Activated T-helper 2 cell treated with anti-CD3 and anti-CD28 coated beads, Interferon-gamma antibody, Interleukin-2, Interleukin-4, amounts not matched to agents 10 μg/mL and 5 μg/mL and 100 μg/mL, durations not matched to agents 14 hours and 24 hours and 36 hours (primary cell): ENCODE measurements at regions of chr5 and their contacts with region 1.

Region 1: GRCh38 chr5:72307968-72308852 is 11.8 kb downstream of the MRPS27 start:
- DNase-seq: peak; percentile 96
- H3K4me3 Mint-ChIP-seq: peak overlapping the region; percentile 84
- H3K27ac Mint-ChIP-seq: peak overlapping the region; percentile 89
- H3K4me1 Mint-ChIP-seq: peaks cover 22% of the 10 kb centered on the region
- H3K27me3 Mint-ChIP-seq: no peaks in the 10 kb centered on the region

Region 2: DNA sequence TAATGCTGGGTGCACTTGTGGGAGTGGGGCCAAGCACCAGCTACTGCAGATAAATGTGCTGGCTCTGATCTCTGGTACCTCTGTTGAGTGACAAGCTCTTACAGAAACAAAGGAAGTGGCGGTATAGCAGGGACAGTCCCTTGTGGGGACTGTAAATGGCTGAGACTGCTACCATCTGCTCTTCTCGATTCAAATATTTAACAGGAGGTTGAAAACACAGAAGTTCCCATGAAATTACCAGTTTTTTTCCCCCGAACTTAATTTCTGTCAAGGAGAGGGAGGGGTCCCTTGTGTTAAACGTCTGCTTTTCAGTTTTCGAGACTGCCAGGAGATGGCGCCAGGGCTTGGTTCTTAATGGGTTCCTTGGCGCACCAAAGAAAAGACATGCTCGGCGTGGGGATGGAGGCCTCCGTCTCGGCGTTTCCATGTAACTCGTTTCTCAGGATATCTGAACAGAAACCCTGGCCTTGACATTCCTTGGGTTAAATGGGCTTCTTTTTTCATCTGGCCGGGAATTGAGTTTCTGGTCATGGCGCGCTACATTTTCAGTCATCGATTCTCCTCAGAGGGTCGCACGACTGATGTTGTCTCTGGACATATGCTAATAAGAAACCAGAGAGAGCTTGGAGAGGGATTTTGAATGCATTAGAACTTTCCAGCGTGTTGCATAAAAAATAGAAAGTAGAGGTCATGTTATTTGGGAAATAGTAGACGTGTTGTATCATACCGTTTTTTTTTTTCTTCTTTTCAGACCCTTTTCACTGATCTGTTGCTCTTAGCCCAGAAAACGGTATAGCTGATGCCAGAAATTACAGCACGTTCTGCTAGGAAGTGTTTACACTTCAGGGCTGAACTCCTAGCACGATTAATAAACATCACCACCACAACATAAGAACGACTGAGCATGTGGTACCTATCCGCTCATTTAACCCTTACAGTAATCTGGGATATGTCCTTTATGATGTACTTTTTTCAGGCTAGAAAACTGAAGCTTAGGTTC is 525.1 kb before region 1 on chr5:
- intact Hi-C with region 1: loop called (anchors 10 kb)
- DNase-seq: no peak
- H3K4me3 Mint-ChIP-seq: peak overlapping the region; percentile 23
- H3K27ac Mint-ChIP-seq: no peak overlapping the region
- H3K4me1 Mint-ChIP-seq: peaks cover 15% of the 10 kb centered on the region
- H3K27me3 Mint-ChIP-seq: peaks cover 4% of the 10 kb centered on the region

Region 3: GRCh38 chr5:72234265-72234700 is 73.9 kb before region 1 on chr5:
- intact Hi-C with region 1: loop called (anchors 5 kb)
- DNase-seq: no peak
- H3K4me3 Mint-ChIP-seq: no peak overlapping the region
- H3K27ac Mint-ChIP-seq: no peak overlapping the region
- H3K4me1 Mint-ChIP-seq: peaks cover 42% of the 10 kb centered on the region
- H3K27me3 Mint-ChIP-seq: peaks cover 25% of the 10 kb centered on the region

Region 4: GRCh38 chr5:72336781-72337553 is 28.8 kb after region 1 on chr5:
- intact Hi-C with region 1: no loop called
- DNase-seq: no peak
- H3K4me3 Mint-ChIP-seq: no peak overlapping the region
- H3K27ac Mint-ChIP-seq: no peak overlapping the region
- H3K4me1 Mint-ChIP-seq: peaks cover 3% of the 10 kb centered on the region
- H3K27me3 Mint-ChIP-seq: no peaks in the 10 kb centered on the region

Region 5: GRCh38 chr5:72347801-72348305 is 39.6 kb after region 1 on chr5:
- intact Hi-C with region 1: loop called (anchors 1 kb)
- DNase-seq: no peak
- H3K4me3 Mint-ChIP-seq: no peak overlapping the region
- H3K27ac Mint-ChIP-seq: peak overlapping the region; percentile 88
- H3K4me1 Mint-ChIP-seq: peaks cover 47% of the 10 kb centered on the region
- H3K27me3 Mint-ChIP-seq: no peaks in the 10 kb centered on the region